CD4-positive, alpha-beta T cell (primary cell): ENCODE measurements at regions of chr1 and their contacts with region 1.

Region 1: GRCh38 chr1:218284934-218285635 is at the start of gene RRP15:
- DNase-seq: peak; percentile 78 to 90 (median 81)
- ATAC-seq: peak; percentile 93
- H3K4me3 ChIP-seq: peak within 1 kb of the TSS; percentile 84
- H3K4me3 Mint-ChIP-seq: peak within 1 kb of the TSS; percentile 100
- H3K27ac ChIP-seq: peak within 1 kb of the TSS; percentile 55 to 65
- H3K27ac Mint-ChIP-seq: peak within 1 kb of the TSS; percentile 87
- H3K4me1 ChIP-seq: peaks cover 12% of the 10 kb centered on the region
- H3K4me1 Mint-ChIP-seq: peaks cover 51% of the 10 kb centered on the region
- H3K27me3 ChIP-seq: peaks cover 6 to 12% of the 10 kb centered on the region in 2 experiments
- H3K27me3 Mint-ChIP-seq: peaks cover 7% of the 10 kb centered on the region
- CTCF ChIP-seq: no peak
- total RNA-seq, gene RRP15: 10.5 to 15.2 TPM

Region 2: DNA sequence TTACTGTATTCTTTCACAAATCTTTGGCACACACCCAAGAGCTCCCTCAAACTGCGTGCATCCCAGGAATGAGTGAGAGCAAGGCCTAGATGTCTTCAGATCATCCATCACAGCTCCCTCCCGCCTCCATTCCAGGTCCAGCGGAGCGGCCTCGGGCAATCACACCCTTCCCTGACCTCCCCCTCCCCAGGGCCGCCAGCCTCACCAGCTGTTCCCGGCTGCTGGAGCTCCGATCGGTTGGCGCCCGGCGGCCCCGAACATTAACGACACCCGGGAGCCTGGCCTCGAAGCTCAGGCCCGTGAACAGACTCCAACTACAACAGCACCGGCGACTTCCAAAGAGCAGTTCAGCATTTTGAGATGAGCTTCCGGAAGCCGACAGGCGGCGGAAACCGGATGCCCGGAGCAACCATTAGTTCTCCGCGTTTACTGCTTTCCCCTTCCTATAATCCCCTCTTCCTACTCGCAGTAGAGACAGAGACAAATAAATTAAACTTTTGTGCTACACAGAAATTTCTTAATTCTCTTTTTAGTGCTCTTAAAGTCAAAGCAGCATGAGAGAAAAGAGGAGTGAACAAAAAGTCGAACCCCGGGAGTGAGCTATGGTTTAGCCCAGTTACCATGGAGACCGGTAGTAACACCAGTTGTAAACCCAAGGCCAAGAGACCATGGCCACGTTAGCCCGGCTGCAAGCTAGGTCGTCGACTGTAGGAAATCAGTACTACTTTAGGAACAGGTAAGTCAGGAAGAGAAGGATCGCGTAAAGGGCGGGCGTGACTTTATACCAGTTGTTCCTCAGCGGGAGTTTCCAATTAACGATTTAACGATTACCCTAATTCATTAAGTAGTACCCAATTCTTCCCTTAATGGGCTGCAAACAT is 654.1 kb before region 1 on chr1 and contains the starts of genes GPATCH2 and SPATA17:
- CTCF ChIA-PET with region 1: no interaction called
- POLR2A ChIA-PET with region 1: interaction called, 9 read pairs
- intact Hi-C with region 1: loop called in 1 of 2 experiments (anchors 5 kb)
- DNase-seq: peak; percentile 62 to 94 (median 72)
- ATAC-seq: peak; percentile 88
- H3K4me3 ChIP-seq: peak within 1 kb of the TSS; percentile 78
- H3K4me3 Mint-ChIP-seq: peak within 1 kb of the TSS; percentile 94
- H3K27ac ChIP-seq: peak within 1 kb of the TSS; percentile 70 to 95
- H3K27ac Mint-ChIP-seq: peak within 1 kb of the TSS; percentile 98
- H3K4me1 ChIP-seq: peaks cover 7% of the 10 kb centered on the region
- H3K4me1 Mint-ChIP-seq: peaks cover 51% of the 10 kb centered on the region
- H3K27me3 ChIP-seq: no peaks in the 10 kb centered on the region
- H3K27me3 Mint-ChIP-seq: peaks cover 18% of the 10 kb centered on the region
- CTCF ChIP-seq: peak; percentile 20
- total RNA-seq, gene GPATCH2: 9.2 to 9.6 TPM
- total RNA-seq, gene SPATA17: not detected

Region 3: GRCh38 chr1:220099826-220100225 is 1814.7 kb after region 1 on chr1:
- CTCF ChIA-PET with region 1: no interaction called
- POLR2A ChIA-PET with region 1: no interaction called
- intact Hi-C with region 1: loop called in 1 of 2 experiments (anchors 5 kb)
- DNase-seq: no peak
- ATAC-seq: no peak
- H3K4me3 ChIP-seq: no peak overlapping the region
- H3K4me3 Mint-ChIP-seq: no peak overlapping the region
- H3K27ac ChIP-seq: no peak overlapping the region
- H3K27ac Mint-ChIP-seq: no peak overlapping the region
- H3K4me1 ChIP-seq: peaks cover 12% of the 10 kb centered on the region
- H3K4me1 Mint-ChIP-seq: peaks cover 15% of the 10 kb centered on the region
- H3K27me3 ChIP-seq: no peaks in the 10 kb centered on the region
- H3K27me3 Mint-ChIP-seq: no peaks in the 10 kb centered on the region
- CTCF ChIP-seq: no peak

Region 4: DNA sequence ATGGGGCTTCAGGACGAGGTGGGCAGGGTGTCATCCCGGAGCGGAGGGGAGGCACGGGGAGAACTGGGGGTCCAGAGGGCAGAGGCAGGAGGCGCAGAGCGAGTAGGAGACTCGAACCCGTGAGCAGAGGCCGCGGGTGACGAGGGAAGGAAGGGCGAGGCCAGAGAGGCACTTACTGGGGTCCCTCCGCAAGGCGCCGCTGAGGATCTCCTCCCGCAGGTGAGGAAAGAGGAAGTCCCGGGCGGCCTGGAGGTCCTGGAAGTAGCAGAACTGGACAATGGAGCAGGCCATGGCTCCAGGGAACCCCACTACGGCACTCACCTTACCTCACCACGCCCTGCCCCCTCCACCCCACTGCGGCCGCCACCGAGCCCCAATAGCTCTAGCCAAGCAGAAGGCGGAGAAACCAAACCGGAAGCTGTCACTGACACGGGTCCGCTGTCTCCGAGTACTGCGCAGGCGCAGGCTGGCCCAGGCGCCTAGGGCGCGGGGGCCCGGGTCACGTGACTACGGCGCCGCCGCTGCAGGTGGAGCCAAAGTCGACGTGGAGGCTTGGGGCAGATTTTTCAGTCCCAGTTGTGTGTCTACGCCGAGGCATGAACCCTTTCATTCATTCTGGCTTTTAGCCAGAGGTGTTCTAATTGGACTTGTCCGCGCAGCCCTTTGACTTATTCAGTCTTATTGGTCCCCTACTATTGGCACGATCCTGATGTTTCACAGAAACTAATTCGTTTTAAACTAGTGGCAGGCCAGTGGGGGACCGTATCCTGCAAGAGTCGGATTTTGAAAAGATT is 1987.2 kb after region 1 on chr1 and contains the start of gene RAB3GAP2:
- CTCF ChIA-PET with region 1: no interaction called
- POLR2A ChIA-PET with region 1: no interaction called
- intact Hi-C with region 1: loop called in 1 of 2 experiments (anchors 10 kb)
- DNase-seq: peak; percentile 93 to 99 (median 96)
- ATAC-seq: peak; percentile 91
- H3K4me3 ChIP-seq: peak within 1 kb of the TSS; percentile 87
- H3K4me3 Mint-ChIP-seq: no peak within 1 kb of the TSS
- H3K27ac ChIP-seq: peak within 1 kb of the TSS; percentile 81 to 87
- H3K27ac Mint-ChIP-seq: no peak within 1 kb of the TSS
- H3K4me1 ChIP-seq: peaks cover 18% of the 10 kb centered on the region
- H3K4me1 Mint-ChIP-seq: peaks cover 18% of the 10 kb centered on the region
- H3K27me3 ChIP-seq: no peaks in the 10 kb centered on the region
- H3K27me3 Mint-ChIP-seq: peaks cover 5% of the 10 kb centered on the region
- CTCF ChIP-seq: no peak
- total RNA-seq, gene RAB3GAP2: 34.7 to 39.4 TPM